Activated naive CD8-positive, alpha-beta T cell treated with anti-CD3 and anti-CD28 coated beads, Interleukin-2, amount 10 ng/mL, durations not matched to agents 7 days and 5 days (primary cell): ENCODE measurements at regions of chr15 and their contacts with region 1.

Region 1: DNA sequence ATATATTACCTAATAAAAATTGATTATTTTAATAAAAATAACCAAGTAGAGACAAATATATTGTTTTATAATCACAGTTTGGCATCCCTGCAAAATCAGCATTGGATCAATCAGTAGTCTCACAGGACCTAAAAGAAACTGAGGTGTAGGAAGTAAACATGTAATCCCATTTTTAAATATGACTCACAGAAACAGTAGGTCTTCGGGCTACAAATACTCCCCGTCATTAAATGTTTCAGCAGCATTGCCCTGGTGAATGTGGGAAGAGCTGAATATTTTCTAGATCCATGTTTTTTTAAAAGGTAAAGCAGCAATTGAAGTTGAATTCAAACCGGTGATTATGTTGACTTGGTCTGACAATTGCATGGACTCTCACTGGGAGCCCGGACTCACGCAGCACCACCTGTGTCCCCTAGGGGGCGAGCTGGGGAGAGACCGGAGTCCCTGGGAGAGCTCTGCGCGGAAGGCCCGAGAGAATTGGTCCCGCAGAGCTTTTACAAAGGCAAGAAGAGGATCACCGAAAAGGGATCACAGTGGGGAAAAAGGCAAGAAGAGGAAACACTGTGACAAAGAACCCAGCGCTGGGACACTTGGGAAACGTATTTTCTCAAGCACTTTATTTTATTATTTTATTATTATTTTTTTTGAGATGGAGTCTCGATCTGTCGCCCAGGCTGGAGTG is 17.2 kb upstream of the USP3 start:
- DNase-seq: peak; percentile 91
- ATAC-seq: peak; percentile 95
- H3K4me3 Mint-ChIP-seq: peak overlapping the region; percentile 59
- H3K27ac Mint-ChIP-seq: peak overlapping the region; percentile 63
- H3K4me1 Mint-ChIP-seq: peaks cover 38% of the 10 kb centered on the region
- H3K27me3 Mint-ChIP-seq: no peaks in the 10 kb centered on the region

Region 2: GRCh38 chr15:63497642-63498467 is 10.6 kb after region 1 on chr15:
- POLR2A ChIA-PET with region 1: interaction called, 46 read pairs
- DNase-seq: peak; percentile 65
- ATAC-seq: peak; percentile 71
- H3K4me3 Mint-ChIP-seq: no peak overlapping the region
- H3K27ac Mint-ChIP-seq: no peak overlapping the region
- H3K4me1 Mint-ChIP-seq: peaks cover 58% of the 10 kb centered on the region
- H3K27me3 Mint-ChIP-seq: no peaks in the 10 kb centered on the region